ENCODE measurements at regions of chr17 and their contacts with region 1.

Region 1: DNA sequence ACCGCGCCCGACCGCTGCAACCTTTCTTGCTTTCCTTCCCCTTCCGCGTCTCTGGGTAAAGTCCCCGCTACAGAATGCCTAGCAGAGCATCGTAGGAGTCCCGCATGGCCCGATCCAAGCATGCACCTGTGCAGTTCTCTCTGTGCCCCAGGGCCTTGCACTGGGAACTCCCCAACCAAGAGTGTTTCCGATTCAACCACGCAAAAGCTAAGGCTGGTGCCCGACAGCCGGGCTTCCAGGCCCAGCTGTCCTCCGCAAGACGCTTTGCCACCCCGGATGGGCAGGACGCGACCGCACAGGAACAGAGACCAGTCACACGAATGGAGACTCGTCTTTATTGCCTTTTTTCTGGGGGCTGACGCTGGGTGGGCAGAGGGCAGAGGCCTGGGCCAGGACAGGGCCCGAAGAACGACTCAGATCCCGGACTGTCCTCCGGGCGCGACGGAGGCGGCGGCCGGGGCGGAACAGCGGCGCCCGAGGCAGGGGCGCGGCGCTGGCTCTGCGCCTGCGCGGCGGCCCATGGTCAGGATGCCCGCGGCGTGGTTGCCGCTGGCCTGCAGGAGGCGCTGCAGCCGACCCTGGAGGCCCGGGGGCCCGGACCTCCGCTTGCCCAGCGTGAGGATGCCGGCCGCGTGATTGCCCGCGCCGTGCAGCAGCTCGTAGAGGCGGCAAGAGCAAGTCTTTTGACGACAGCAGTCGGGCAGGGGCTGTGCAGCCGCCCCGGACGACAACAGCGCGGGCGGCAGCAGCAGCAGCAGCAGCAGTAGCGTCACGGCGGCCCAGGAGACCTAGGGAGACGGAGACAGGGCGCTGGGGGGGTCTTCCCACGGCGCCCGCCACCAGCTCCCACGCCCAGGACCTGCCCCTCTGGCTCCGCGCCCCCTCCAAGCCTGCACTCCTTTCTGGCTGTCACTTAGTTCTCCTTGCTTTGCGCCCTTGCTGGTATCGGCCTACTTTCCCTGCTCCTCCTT is 1.2 kb downstream of the HCRT start:
- DNase-seq: peak; percentile 85
- ATAC-seq: peak; percentile 80
- H3K4me3 Mint-ChIP-seq: peak overlapping the region; percentile 98
- H3K27ac Mint-ChIP-seq: peak overlapping the region; percentile 79
- H3K4me1 Mint-ChIP-seq: peaks cover 40% of the 10 kb centered on the region
- H3K27me3 Mint-ChIP-seq: peaks cover 31% of the 10 kb centered on the region

Region 2: GRCh38 chr17:42019509-42020404 is 164.3 kb before region 1 on chr17 and contains the start of gene NKIRAS2:
- CTCF ChIA-PET with region 1: interaction called, 11 read pairs
- DNase-seq: peak; percentile 95
- ATAC-seq: peak; percentile 78
- H3K4me3 Mint-ChIP-seq: peak within 1 kb of the TSS; percentile 93
- H3K27ac Mint-ChIP-seq: peak within 1 kb of the TSS; percentile 77
- H3K4me1 Mint-ChIP-seq: peaks cover 57% of the 10 kb centered on the region
- H3K27me3 Mint-ChIP-seq: no peaks in the 10 kb centered on the region
- total RNA-seq, gene NKIRAS2: 21.0 to 23.7 TPM

Region 3: DNA sequence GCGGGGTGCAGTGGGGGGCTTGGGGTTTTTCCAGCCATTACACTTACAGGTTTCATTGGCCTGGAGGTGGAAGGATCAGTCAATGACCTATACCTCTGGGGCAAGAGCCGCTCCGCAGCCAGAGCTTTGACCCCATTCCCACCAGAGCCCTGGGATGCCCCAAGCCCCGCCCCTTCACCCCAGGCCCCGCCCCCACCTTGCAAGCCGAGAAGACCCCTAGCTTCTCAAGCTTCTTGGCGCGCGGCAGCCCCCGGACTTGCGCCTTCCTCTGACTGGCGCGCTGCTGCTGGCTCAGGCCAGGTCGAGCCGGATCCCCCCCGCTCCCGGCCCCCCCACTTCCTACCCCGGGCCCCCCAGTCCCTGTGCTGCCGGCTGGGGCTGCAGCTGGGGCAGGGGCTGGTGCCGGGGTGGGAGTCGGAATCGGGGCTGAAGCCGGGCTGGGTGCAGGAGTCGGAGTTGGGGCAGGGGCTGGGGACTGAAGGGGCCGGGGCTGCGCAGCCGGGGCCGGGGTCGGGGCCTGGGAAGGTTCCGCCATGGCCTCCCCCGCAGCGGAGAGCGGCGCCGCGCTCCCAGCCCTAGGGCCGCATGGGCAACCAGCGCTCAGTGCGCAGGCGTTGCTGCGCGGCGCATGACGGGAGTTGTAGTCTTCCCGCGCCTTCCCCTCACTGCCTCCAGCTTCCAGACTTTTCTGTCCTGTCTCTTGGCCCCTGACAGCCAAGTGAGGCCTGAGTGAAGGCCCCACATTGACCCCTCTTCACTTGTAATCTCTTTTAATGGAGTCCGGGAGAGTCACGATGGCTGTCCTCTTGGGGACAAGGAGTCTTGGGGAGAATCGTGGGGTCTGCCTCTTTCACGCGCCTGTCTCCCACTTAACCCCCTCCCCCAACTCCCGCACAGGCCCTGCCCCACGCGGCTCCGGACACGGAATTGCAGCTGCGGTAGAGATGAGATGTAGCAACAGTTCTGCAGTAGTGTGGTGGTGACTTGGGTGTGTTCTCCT is 63.0 kb before region 1 on chr17 and contains the start of gene KAT2A:
- CTCF ChIA-PET with region 1: interaction called, 29 read pairs
- DNase-seq: peak; percentile 84
- ATAC-seq: peak; percentile 93
- H3K4me3 Mint-ChIP-seq: peak within 1 kb of the TSS; percentile 67
- H3K27ac Mint-ChIP-seq: peak within 1 kb of the TSS; percentile 69
- H3K4me1 Mint-ChIP-seq: peaks cover 34% of the 10 kb centered on the region
- H3K27me3 Mint-ChIP-seq: no peaks in the 10 kb centered on the region
- total RNA-seq, gene KAT2A: 49.0 to 58.2 TPM

Region 4: GRCh38 chr17:42132941-42133340 is 51.1 kb before region 1 on chr17:
- CTCF ChIA-PET with region 1: interaction called, 16 read pairs
- DNase-seq: no peak
- ATAC-seq: peak; percentile 61
- H3K4me3 Mint-ChIP-seq: no peak overlapping the region
- H3K27ac Mint-ChIP-seq: peak overlapping the region; percentile 72
- H3K4me1 Mint-ChIP-seq: peaks cover 52% of the 10 kb centered on the region
- H3K27me3 Mint-ChIP-seq: no peaks in the 10 kb centered on the region

Region 5: GRCh38 chr17:42193969-42194899 is 10.2 kb after region 1 on chr17 and contains the start of gene GHDC:
- CTCF ChIA-PET with region 1: interaction called, 26 read pairs
- DNase-seq: peak; percentile 92
- ATAC-seq: peak; percentile 99
- H3K4me3 Mint-ChIP-seq: peak within 1 kb of the TSS; percentile 95
- H3K27ac Mint-ChIP-seq: peak within 1 kb of the TSS; percentile 92
- H3K4me1 Mint-ChIP-seq: peaks cover 21% of the 10 kb centered on the region
- H3K27me3 Mint-ChIP-seq: no peaks in the 10 kb centered on the region
- total RNA-seq, gene GHDC: 17.0 to 18.0 TPM

Region 6: DNA sequence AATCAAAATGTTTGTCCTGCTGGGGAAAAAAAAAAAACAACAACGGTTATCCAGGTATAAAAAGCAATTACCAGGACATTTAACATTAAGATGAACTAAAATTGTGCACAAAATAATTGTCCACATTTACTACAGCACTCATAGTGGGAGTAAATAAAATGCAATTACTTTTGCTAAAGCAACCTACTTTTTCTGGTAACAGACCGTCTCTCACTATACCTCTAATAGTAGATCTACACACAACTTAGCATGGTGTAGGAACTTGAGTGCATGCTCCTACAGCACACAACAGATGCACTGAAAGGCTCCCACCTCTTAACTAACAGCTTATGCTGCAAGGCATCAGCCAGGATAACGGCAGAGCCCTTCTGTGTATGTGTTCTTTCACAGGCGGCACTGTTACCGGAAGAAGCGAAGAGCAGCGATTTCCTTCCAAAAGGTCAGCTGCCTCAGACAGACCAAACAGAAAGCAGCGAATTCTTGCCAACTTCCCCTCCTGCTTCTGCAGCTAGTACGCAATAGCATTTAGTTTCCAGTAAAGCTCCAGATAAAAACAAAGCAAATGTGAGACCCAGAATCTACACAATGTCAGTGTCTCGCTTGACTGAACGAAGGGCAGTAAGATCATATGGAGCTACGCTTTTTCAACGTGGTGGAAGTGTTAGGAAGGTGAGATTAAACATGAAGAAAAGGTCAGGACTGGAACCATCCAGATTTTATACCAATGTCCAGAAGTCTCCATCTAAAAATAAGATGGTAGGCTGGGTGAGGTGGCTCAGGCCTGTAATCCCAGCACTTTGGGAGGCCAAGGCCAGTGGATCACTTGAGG is 64.5 kb after region 1 on chr17:
- CTCF ChIA-PET with region 1: interaction called, 11 read pairs
- DNase-seq: peak; percentile 89
- ATAC-seq: peak; percentile 89
- H3K4me3 Mint-ChIP-seq: peak overlapping the region; percentile 80
- H3K27ac Mint-ChIP-seq: peak overlapping the region; percentile 96
- H3K4me1 Mint-ChIP-seq: peaks cover 65% of the 10 kb centered on the region
- H3K27me3 Mint-ChIP-seq: no peaks in the 10 kb centered on the region

Region 7: GRCh38 chr17:42281571-42282096 is 97.6 kb after region 1 on chr17:
- CTCF ChIA-PET with region 1: no interaction called
- DNase-seq: peak; percentile 36
- ATAC-seq: no peak
- H3K4me3 Mint-ChIP-seq: no peak overlapping the region
- H3K27ac Mint-ChIP-seq: no peak overlapping the region
- H3K4me1 Mint-ChIP-seq: peaks cover 29% of the 10 kb centered on the region
- H3K27me3 Mint-ChIP-seq: no peaks in the 10 kb centered on the region